ENCODE measurements at regions of chr13 and their contacts with region 1.

Region 1: GRCh38 chr13:64884976-64885375 is 2345.2 kb downstream of the PCDH9 start:
- DNase-seq: no peak
- H3K4me3 ChIP-seq: no peak overlapping the region
- H3K27ac ChIP-seq: no peak overlapping the region
- H3K4me1 ChIP-seq: no peaks in the 10 kb centered on the region
- H3K27me3 ChIP-seq: no peaks in the 10 kb centered on the region
- CTCF ChIP-seq: no peak
- POLR2A ChIP-seq: no peak

Region 2: GRCh38 chr13:65435590-65435989 is 550.6 kb after region 1 on chr13:
- intact Hi-C with region 1: loop called (anchors 5 kb)
- DNase-seq: no peak
- H3K4me3 ChIP-seq: no peak overlapping the region
- H3K27ac ChIP-seq: no peak overlapping the region
- H3K4me1 ChIP-seq: no peaks in the 10 kb centered on the region
- H3K27me3 ChIP-seq: no peaks in the 10 kb centered on the region
- CTCF ChIP-seq: no peak
- POLR2A ChIP-seq: no peak